ENCODE measurements at regions of chr3 and their contacts with region 1.

Region 1: DNA sequence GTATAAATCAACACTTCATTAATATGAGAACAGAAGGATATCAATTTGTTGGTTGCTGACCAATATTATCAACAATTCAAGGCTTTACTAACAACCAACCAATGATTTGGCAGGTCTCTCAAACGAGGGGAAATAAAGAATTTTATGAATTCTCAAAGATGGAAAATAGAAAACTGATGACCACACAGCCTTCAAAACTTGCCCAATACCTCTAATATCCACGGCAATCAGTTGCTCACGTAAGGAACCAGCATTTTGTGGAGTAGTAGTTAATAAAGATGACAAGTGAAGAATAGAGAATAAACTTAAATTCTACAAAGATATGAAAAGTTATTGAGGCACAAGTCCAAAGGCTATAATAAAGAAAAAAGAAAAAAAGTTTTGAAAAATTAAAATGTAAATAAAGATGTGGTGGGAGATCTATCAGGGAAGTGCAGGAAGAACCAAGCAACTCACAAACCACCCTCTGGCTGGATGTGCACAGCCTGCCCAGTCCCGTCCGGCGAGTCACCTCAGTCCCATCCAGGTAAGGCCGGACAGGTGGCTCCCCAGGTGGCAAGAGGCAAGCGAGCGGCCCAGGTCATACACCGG is 808 bp downstream of the GK5 start:
- DNase-seq: no peak
- H3K4me3 ChIP-seq: peak overlapping the region; percentile 90
- H3K27ac ChIP-seq: peak overlapping the region; percentile 84
- H3K4me1 ChIP-seq: no peaks in the 10 kb centered on the region
- H3K27me3 ChIP-seq: no peaks in the 10 kb centered on the region
- CTCF ChIP-seq: no peak

Region 2: DNA sequence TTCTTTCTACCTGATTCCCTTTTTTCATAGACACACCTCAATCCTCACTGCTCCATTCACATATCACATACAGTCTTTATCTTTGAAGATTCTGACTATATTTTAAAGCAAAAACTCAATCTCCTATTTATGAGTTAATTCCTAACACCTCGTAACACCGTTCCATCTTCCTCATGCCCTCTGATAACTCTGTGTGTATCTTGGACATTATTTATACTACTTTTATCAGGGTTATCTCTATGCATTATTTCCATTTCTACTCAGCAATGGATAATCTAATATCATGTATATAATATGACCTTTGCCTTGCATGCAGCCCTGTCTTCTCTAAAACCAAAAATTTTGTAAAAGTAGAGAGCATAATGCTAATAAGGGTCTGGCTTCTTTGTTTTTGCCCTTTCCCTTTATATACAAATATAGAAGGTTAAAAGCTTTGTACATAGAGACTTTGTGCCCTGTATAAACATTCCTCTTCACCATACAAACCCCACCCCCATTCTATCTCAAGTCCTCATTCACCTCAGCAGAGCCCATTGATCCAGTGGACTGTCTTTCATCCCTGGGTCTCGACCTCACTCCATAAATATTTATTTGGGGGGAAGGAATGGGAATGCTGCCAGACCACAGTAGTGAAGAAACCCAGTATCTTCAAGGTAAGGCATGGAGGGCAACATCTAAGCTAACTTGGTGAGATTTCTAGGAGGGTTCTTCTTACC is 1524.9 kb before region 1 on chr3:
- CTCF ChIA-PET with region 1: no interaction called
- POLR2A ChIA-PET with region 1: no interaction called
- intact Hi-C with region 1: no loop called
- DNase-seq: no peak
- H3K4me3 ChIP-seq: no peak overlapping the region
- H3K27ac ChIP-seq: no peak overlapping the region
- H3K4me1 ChIP-seq: no peaks in the 10 kb centered on the region
- H3K27me3 ChIP-seq: no peaks in the 10 kb centered on the region
- CTCF ChIP-seq: no peak

Region 3: DNA sequence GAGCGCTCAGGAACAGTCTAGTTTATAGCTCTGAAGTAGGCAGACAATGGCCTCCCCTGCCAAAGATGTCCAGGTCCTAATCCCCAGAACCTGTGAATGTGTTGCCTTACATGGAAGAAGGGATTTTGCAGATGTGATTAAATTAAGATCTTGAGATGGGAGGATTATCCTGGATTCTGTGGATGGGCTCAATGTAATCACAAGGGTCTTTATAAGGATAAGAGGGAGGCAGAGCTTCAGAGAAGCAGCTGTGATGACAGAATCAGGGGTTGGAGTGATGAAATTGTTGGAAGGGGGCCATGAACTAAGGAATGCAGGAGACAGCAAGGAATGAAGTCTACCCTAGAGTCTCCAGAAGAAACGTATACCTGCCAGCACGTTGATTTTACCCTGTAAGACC is 14.8 kb after region 1 on chr3:
- CTCF ChIA-PET with region 1: no interaction called
- POLR2A ChIA-PET with region 1: no interaction called
- intact Hi-C with region 1: no loop called
- DNase-seq: peak; percentile 40
- H3K4me3 ChIP-seq: no peak overlapping the region
- H3K27ac ChIP-seq: no peak overlapping the region
- H3K4me1 ChIP-seq: peaks cover 3% of the 10 kb centered on the region
- H3K27me3 ChIP-seq: no peaks in the 10 kb centered on the region
- CTCF ChIP-seq: no peak

Region 4: DNA sequence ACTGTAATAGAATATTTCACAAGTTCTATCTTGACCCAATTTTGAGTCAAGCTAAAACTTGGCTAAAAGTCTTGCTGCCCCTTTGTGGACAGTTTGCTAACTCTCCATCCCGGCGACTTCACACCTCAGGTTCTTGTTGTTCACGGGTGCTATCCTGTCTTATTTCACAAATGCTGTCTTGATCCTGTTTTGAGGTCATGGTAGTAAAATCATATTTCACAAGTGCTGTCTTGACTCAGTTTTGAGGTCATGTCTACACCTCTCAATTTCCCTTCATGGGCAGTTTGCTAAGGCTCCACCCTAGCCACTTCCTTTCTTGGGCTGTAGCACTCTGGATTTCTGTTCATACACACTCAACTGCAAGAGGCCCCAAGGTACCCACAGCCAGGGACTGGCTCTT is 45.8 kb after region 1 on chr3:
- CTCF ChIA-PET with region 1: no interaction called
- POLR2A ChIA-PET with region 1: no interaction called
- intact Hi-C with region 1: loop called (anchors 5 kb)
- DNase-seq: no peak
- H3K4me3 ChIP-seq: no peak overlapping the region
- H3K27ac ChIP-seq: no peak overlapping the region
- H3K4me1 ChIP-seq: peaks cover 33% of the 10 kb centered on the region
- H3K27me3 ChIP-seq: no peaks in the 10 kb centered on the region
- CTCF ChIP-seq: no peak